Calu3 (cell line): ENCODE measurements at regions of chr7 and their contacts with region 1.

Region 1: GRCh38 chr7:141663081-141663849 is 38.7 kb downstream of the DENND11 start:
- DNase-seq: peak; percentile 76
- H3K4me3 Mint-ChIP-seq: no peak overlapping the region
- H3K27ac Mint-ChIP-seq: peak overlapping the region; percentile 71
- H3K4me1 Mint-ChIP-seq: no peaks in the 10 kb centered on the region
- H3K27me3 Mint-ChIP-seq: no peaks in the 10 kb centered on the region
- CTCF ChIP-seq: no peak

Region 2: DNA sequence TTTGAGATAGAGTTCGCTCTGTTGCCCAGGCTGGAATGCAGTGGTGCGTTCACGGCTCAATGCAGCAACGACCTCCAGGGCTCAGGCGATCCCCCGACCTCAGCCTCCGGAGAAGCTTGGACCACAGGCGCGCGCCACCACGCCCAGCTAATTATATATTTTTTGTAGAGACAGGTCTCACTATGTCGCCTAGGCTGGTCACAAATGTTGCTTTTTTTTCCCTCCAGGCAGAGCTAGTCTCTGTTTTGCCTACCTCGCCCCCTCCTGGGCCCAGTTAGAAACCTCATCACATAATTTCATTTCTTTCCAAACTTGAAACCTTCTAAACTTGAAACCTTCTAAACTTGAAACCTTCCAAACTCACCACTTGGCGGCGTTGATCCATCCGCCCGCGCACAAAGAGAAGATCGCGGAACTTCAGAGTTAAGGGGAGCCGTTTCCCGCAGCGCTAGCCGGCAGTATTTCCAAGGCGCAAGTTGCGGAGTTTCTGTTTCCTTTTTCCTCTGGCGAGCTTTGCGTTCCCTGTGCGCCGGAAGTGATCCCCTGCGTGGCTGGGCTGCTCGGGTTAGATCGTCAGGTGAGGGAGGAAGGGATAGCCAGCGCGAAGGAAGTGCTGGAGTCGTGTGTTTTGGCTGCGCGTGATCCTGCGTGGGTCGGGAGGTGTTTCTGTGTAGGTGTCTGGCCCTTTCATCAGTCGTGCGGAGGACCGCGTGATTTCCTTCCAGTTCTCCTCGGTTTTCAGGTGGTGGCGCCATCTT is 74.7 kb after region 1 on chr7 and contains the start of gene SSBP1:
- CTCF ChIA-PET with region 1: interaction called, 6 read pairs
- intact Hi-C with region 1: loop called (anchors 1 kb)
- DNase-seq: peak; percentile 89
- H3K4me3 Mint-ChIP-seq: peak within 1 kb of the TSS; percentile 94
- H3K27ac Mint-ChIP-seq: peak within 1 kb of the TSS; percentile 97
- H3K4me1 Mint-ChIP-seq: peaks cover 32% of the 10 kb centered on the region
- H3K27me3 Mint-ChIP-seq: peaks cover 2% of the 10 kb centered on the region
- CTCF ChIP-seq: peak; percentile 54
- total RNA-seq, gene SSBP1: 162 and 164 TPM in 2 replicates

Region 3: GRCh38 chr7:142139597-142140400 is 476.5 kb after region 1 on chr7:
- CTCF ChIA-PET with region 1: no interaction called
- intact Hi-C with region 1: no loop called
- DNase-seq: no peak
- H3K4me3 Mint-ChIP-seq: peak overlapping the region; percentile 34
- H3K27ac Mint-ChIP-seq: peak overlapping the region; percentile 77
- H3K4me1 Mint-ChIP-seq: peaks cover 35% of the 10 kb centered on the region
- H3K27me3 Mint-ChIP-seq: no peaks in the 10 kb centered on the region
- CTCF ChIP-seq: no peak